Right cardiac atrium (tissue), 5 donors: ENCODE measurements at regions of chr19 and their contacts with region 1.

Region 1: GRCh38 chr19:46487802-46488445 is 7.7 kb downstream of the PNMA8B start:
- DNase-seq: peak; percentile 79 to 92 (median 92)
- ATAC-seq: peak; percentile 62 to 74
- H3K4me3 ChIP-seq: peak overlapping the region; percentile 50
- H3K27ac ChIP-seq: no peak overlapping the region
- H3K4me1 ChIP-seq: peaks cover 5% of the 10 kb centered on the region
- H3K27me3 ChIP-seq: no peaks in the 10 kb centered on the region

Region 2: GRCh38 chr19:46288896-46289588 is 198.9 kb before region 1 on chr19:
- intact Hi-C with region 1: loop called in 1 of 4 experiments (anchors 10 kb)
- DNase-seq: peak in 2 of 3 donors; percentile 59 to 70
- ATAC-seq: peak; percentile 72 to 75
- H3K4me3 ChIP-seq: no peak overlapping the region
- H3K27ac ChIP-seq: peak overlapping the region; percentile 88
- H3K4me1 ChIP-seq: peaks cover 3% of the 10 kb centered on the region
- H3K27me3 ChIP-seq: no peaks in the 10 kb centered on the region

Region 3: GRCh38 chr19:46392243-46392801 is 95.6 kb before region 1 on chr19:
- intact Hi-C with region 1: loop called in 2 of 4 experiments (anchors 2 kb)
- DNase-seq: peak; percentile 13 to 48 (median 36)
- ATAC-seq: no peak
- H3K4me3 ChIP-seq: no peak overlapping the region
- H3K27ac ChIP-seq: no peak overlapping the region
- H3K4me1 ChIP-seq: no peaks in the 10 kb centered on the region
- H3K27me3 ChIP-seq: no peaks in the 10 kb centered on the region

Region 4: DNA sequence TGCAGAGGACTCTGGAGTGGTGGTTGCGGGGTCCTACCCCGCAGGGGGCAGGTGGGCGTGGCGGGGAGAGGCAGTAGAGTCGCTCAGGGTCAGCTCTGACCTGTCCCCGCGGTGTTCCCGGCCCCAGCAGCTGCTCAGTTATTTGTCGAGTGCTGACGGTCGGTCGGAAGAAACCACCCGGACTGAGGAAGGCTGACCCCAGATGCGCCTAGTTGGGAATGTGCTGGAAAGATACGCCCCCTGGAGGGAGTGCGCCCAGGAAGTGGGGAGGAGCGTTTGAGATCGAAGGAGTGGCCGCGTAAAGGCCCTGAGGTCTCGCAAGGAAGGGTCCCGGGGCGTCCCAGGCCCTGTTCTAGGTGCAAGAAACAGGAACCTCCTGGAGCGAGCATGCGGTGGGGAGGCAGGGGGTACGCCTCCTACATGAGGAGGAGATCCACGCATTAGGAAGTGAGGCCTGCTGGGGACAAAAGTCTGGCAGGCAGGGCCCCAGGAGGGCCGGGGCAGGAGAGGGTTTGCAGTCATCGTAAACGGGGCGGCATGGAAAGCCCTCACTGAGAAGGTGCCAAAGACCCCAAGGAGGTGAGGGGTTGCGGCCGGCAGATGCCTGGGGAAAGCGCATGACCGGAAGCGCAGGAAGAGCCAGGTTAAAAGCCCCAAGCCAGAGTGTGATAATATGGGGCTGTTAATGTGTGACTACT is 83.7 kb before region 1 on chr19:
- intact Hi-C with region 1: loop called (anchors 2 to 5 kb)
- DNase-seq: peak; percentile 62 to 90 (median 83)
- ATAC-seq: peak; percentile 56 to 64
- H3K4me3 ChIP-seq: peak overlapping the region; percentile 24
- H3K27ac ChIP-seq: peak overlapping the region; percentile 10
- H3K4me1 ChIP-seq: peaks cover 4% of the 10 kb centered on the region
- H3K27me3 ChIP-seq: no peaks in the 10 kb centered on the region

Region 5: GRCh38 chr19:46600384-46601317 is 112.7 kb after region 1 on chr19:
- intact Hi-C with region 1: no loop called
- DNase-seq: peak; percentile 98 to 100 (median 99)
- ATAC-seq: peak; percentile 92
- H3K4me3 ChIP-seq: peak overlapping the region; percentile 98
- H3K27ac ChIP-seq: peak overlapping the region; percentile 98
- H3K4me1 ChIP-seq: peaks cover 9% of the 10 kb centered on the region
- H3K27me3 ChIP-seq: no peaks in the 10 kb centered on the region